ENCODE measurements at regions of chr4 and their contacts with region 1.

Region 1: GRCh38 chr4:20278195-20278594 is 26.5 kb downstream of the SLIT2 start:
- DNase-seq: no peak
- ATAC-seq: no peak
- H3K4me3 ChIP-seq: no peak overlapping the region
- H3K27ac ChIP-seq: no peak overlapping the region
- H3K4me1 ChIP-seq: no peaks in the 10 kb centered on the region
- H3K27me3 ChIP-seq: peaks cover 10% of the 10 kb centered on the region
- CTCF ChIP-seq: no peak
- POLR2A ChIP-seq: no peak
- RAD21 ChIP-seq: no peak

Region 2: GRCh38 chr4:19936476-19936875 is 341.7 kb before region 1 on chr4:
- CTCF ChIA-PET with region 1: no interaction called
- POLR2A ChIA-PET with region 1: no interaction called
- dilution Hi-C with region 1: no loop called
- in situ Hi-C with region 1: no loop called
- intact Hi-C with region 1: no loop called
- DNase-seq: peak; percentile 88
- ATAC-seq: peak; percentile 89
- H3K4me3 ChIP-seq: no peak overlapping the region
- H3K27ac ChIP-seq: no peak overlapping the region
- H3K4me1 ChIP-seq: no peaks in the 10 kb centered on the region
- H3K27me3 ChIP-seq: peaks cover 3% of the 10 kb centered on the region; the same call in 1 of the 2 replicates
- CTCF ChIP-seq: no peak
- POLR2A ChIP-seq: no peak
- RAD21 ChIP-seq: no peak

Region 3: GRCh38 chr4:20237894-20238537 is 40.2 kb before region 1 on chr4:
- CTCF ChIA-PET with region 1: no interaction called
- POLR2A ChIA-PET with region 1: no interaction called
- dilution Hi-C with region 1: no loop called
- in situ Hi-C with region 1: no loop called
- intact Hi-C with region 1: loop called (anchors 1 kb)
- DNase-seq: no peak
- ATAC-seq: no peak
- H3K4me3 ChIP-seq: no peak overlapping the region
- H3K27ac ChIP-seq: no peak overlapping the region
- H3K4me1 ChIP-seq: no peaks in the 10 kb centered on the region
- H3K27me3 ChIP-seq: no peaks in the 10 kb centered on the region
- CTCF ChIP-seq: no peak
- POLR2A ChIP-seq: no peak
- RAD21 ChIP-seq: no peak

Region 4: DNA sequence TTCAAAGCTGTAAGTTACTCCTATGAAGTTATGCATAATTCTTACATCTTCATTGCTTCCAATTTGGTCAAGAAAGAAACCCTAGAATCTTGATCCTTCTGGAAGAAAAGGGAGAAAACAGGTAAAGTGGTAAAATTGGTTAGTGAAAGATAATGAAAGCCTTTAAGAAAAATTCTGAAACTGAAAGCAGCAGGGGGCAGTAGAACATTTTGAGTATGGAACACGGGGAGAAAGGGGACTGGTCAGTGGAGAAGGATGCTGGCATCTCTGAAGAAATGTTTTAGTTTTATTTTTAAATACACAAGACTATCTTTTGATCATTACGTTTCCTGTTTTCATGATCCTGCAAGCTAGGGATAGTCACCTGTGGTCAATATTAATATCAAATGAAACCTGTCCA is 27.8 kb after region 1 on chr4:
- CTCF ChIA-PET with region 1: no interaction called
- POLR2A ChIA-PET with region 1: no interaction called
- dilution Hi-C with region 1: no loop called
- in situ Hi-C with region 1: no loop called
- intact Hi-C with region 1: no loop called
- DNase-seq: peak; percentile 59
- ATAC-seq: peak; percentile 65
- H3K4me3 ChIP-seq: no peak overlapping the region
- H3K27ac ChIP-seq: no peak overlapping the region
- H3K4me1 ChIP-seq: no peaks in the 10 kb centered on the region
- H3K27me3 ChIP-seq: no peaks in the 10 kb centered on the region
- CTCF ChIP-seq: peak; percentile 54
- POLR2A ChIP-seq: no peak
- RAD21 ChIP-seq: peak; percentile 47

Measured in IMR-90 (cell line).